Activated CD8-positive, alpha-beta T cell treated with anti-CD3 and anti-CD28 coated beads, Interleukin-2, amount 10 ng/mL, durations not matched to agents 7 days and 5 days (primary cell): ENCODE measurements at regions of chr17 and their contacts with region 1.

Region 1: DNA sequence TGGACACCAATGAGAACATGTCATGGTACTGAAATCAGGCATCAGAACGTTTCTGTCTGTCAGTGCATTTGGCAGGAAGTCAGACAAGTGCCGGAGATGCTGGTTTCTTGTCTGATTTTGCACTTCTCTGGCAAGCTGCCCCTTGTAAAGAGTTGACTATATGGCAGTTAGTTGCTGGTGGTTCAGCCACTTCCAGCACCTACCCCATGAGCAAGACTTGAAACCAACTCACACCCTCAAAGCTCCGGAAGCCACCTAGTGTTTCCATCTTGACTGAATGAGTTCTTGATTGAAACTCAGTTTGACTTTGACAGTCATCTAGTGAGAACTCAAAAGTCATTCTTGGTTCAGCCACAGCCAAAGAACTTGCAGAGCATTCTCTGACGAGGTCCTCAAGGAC is 225.1 kb downstream of the SPECC1 start:
- DNase-seq: peak; percentile 81
- ATAC-seq: peak; percentile 97
- H3K4me3 Mint-ChIP-seq: peak overlapping the region; percentile 37
- H3K27ac Mint-ChIP-seq: peak overlapping the region; percentile 92
- H3K4me1 Mint-ChIP-seq: peaks cover 25% of the 10 kb centered on the region
- H3K27me3 Mint-ChIP-seq: no peaks in the 10 kb centered on the region

Region 2: DNA sequence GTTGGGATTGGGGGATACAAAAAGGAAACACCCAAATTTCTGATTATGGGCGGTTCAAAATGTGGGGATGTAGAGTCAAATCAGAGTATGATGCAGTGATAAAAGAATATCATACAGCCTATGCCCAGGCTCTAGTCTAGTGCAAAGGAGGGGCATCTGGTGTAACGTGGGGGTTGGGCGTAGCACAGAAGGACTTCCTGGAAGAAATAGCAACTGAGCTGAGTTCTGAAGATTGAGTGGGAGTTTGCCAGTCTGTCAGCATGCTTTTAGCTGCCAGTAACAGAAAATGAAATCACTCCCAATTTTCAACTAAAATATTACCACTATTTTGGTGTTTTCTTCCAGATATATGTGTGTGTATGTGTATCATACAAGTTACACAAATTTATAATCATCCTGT is 28.2 kb before region 1 on chr17:
- CTCF ChIA-PET with region 1: no interaction called
- POLR2A ChIA-PET with region 1: no interaction called
- DNase-seq: no peak
- ATAC-seq: no peak
- H3K4me3 Mint-ChIP-seq: no peak overlapping the region
- H3K27ac Mint-ChIP-seq: no peak overlapping the region
- H3K4me1 Mint-ChIP-seq: peaks cover 15% of the 10 kb centered on the region
- H3K27me3 Mint-ChIP-seq: no peaks in the 10 kb centered on the region

Region 3: DNA sequence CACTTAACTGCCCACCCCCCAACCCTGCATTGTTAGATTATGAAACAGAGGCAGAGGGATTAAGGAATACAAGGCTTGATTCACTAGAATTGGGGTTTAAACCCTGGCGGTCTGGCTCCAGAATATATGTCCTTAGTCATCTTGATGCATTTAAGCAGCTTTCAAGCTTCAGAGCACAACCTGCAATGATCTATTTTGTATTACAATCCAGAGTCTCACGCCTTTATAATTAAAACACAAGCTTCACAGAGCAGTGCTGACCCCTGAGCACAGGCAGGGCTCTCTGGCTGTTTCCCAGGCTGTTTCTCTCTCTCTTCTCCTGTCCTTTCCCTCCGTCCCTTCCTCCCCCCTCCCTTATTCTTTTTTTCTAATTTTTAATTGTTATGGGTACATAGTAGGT is 16.0 kb before region 1 on chr17:
- CTCF ChIA-PET with region 1: no interaction called
- POLR2A ChIA-PET with region 1: no interaction called
- DNase-seq: no peak
- ATAC-seq: no peak
- H3K4me3 Mint-ChIP-seq: no peak overlapping the region
- H3K27ac Mint-ChIP-seq: no peak overlapping the region
- H3K4me1 Mint-ChIP-seq: no peaks in the 10 kb centered on the region
- H3K27me3 Mint-ChIP-seq: peaks cover 25% of the 10 kb centered on the region

Region 4: DNA sequence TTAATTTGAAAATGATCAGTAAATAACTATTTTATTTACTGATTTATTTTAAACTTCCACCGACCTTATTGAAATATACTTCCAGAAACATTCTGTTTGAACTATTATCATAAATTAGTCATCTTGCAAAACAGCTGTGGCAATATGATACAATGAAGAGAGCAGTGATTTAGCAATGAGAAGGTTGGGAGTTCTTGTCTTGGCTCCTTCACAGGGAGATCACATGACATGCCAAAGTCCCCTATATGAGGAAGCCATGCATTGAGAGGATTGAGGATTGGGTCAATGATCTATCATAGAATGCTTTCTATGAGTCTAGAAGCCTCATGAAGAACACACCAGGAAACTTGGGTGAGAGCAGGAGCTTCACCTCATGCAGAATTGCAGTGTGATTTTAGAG is 10.4 kb after region 1 on chr17:
- CTCF ChIA-PET with region 1: interaction called, 34 read pairs
- POLR2A ChIA-PET with region 1: interaction called, 3 read pairs
- DNase-seq: no peak
- ATAC-seq: no peak
- H3K4me3 Mint-ChIP-seq: no peak overlapping the region
- H3K27ac Mint-ChIP-seq: no peak overlapping the region
- H3K4me1 Mint-ChIP-seq: peaks cover 21% of the 10 kb centered on the region
- H3K27me3 Mint-ChIP-seq: no peaks in the 10 kb centered on the region

Region 5: GRCh38 chr17:20273741-20274500 is 39.6 kb after region 1 on chr17:
- CTCF ChIA-PET with region 1: interaction called, 20 read pairs
- POLR2A ChIA-PET with region 1: interaction called, 4 read pairs
- DNase-seq: peak; percentile 40
- ATAC-seq: peak; percentile 64
- H3K4me3 Mint-ChIP-seq: peak overlapping the region; percentile 52
- H3K27ac Mint-ChIP-seq: peak overlapping the region; percentile 86
- H3K4me1 Mint-ChIP-seq: peaks cover 79% of the 10 kb centered on the region
- H3K27me3 Mint-ChIP-seq: no peaks in the 10 kb centered on the region